IMR-90 (cell line): ENCODE measurements at regions of chr1 and their contacts with region 1.

Region 1: DNA sequence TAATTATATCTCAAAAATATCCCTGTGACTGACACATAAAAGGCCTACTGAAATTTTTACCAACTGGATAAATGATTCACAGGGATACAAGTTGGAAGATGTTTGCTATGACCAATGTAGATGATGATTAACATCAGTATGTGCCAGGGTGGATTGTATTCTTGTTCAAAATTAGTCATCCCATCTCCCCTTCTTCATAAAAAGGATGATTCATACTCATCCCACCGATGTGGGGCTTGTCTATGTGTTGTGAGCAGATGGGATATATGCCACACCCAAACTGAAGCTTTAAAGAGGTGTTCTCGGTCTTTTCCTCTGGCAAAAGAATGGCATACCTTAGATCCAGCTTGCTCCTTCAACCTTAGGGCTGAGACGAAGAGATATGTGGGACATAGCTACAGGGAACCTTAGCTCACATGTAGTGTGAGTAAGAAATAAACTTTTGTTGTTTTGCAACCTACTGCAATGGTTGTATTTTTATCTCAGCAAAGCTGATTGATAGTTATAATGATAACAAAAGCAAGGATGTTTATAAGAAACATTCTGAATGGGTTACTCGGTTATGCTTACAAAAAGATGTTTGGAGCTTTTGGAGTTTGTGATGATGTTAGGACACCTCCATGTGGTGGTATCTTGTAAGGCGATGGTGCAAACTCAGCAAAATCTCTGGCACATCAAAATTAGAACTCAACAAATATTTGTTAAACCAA is 29.4 kb downstream of the SPATA17 start:
- DNase-seq: peak; percentile 90
- ATAC-seq: peak; percentile 93
- H3K4me3 ChIP-seq: no peak overlapping the region
- H3K27ac ChIP-seq: peak overlapping the region; percentile 74
- H3K4me1 ChIP-seq: peaks cover 5% of the 10 kb centered on the region
- H3K27me3 ChIP-seq: no peaks in the 10 kb centered on the region
- CTCF ChIP-seq: peak; percentile 78
- POLR2A ChIP-seq: no peak
- RAD21 ChIP-seq: peak; percentile 75

Region 2: DNA sequence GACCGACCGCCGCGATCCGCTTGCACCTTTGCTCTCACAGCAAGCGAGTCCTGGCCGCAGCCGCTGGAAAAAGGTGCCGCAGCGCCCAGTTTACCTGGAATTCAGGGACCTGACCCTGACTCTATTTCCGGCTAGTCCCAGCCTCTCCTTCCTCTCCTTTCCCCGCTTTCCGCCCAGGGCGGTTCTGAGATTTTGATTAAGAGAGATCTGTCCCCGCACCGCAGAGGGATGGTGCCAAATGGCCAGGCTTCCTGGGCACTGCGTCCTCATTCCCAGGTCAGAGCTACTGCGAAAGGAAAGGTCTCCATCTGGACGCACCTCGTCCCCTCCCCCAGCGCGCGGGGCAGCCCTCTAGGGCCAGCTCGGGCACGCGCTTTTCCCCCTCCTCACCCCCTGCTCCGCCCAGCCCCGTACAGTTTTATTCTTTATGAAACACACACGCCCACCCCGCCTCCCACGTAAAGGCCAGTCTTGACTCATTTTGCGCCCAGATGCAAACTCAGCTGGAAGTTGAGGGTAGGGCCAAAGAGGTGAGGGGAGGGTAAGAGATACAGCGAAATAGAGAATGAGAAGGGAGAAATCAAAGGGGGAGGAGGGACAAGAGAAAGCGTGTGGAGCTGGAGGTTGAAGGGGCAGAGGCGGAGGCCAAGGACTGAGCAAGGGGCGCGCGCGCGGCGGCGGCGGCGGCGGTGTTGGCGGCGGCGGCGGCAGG is 525.5 kb before region 1 on chr1:
- CTCF ChIA-PET with region 1: no interaction called
- POLR2A ChIA-PET with region 1: no interaction called
- dilution Hi-C with region 1: no loop called
- in situ Hi-C with region 1: no loop called
- intact Hi-C with region 1: loop called (anchors 10 kb)
- DNase-seq: peak; percentile 4
- ATAC-seq: peak; percentile 67
- H3K4me3 ChIP-seq: peak overlapping the region; percentile 75
- H3K27ac ChIP-seq: no peak overlapping the region
- H3K4me1 ChIP-seq: no peaks in the 10 kb centered on the region; the same call in 1 of the 2 replicates
- H3K27me3 ChIP-seq: peaks cover 50% of the 10 kb centered on the region
- CTCF ChIP-seq: no peak
- POLR2A ChIP-seq: no peak
- RAD21 ChIP-seq: no peak

Region 3: GRCh38 chr1:217418269-217419193 is 242.0 kb before region 1 on chr1:
- CTCF ChIA-PET with region 1: no interaction called
- POLR2A ChIA-PET with region 1: no interaction called
- dilution Hi-C with region 1: no loop called
- in situ Hi-C with region 1: no loop called
- intact Hi-C with region 1: loop called (anchors 2 kb)
- DNase-seq: peak; percentile 58
- ATAC-seq: peak; percentile 85
- H3K4me3 ChIP-seq: peak overlapping the region; percentile 12; the same call in 1 of the 2 replicates
- H3K27ac ChIP-seq: peak overlapping the region; percentile 45; the same call in 1 of the 2 replicates
- H3K4me1 ChIP-seq: peaks cover 2% of the 10 kb centered on the region
- H3K27me3 ChIP-seq: no peaks in the 10 kb centered on the region
- CTCF ChIP-seq: no peak
- POLR2A ChIP-seq: no peak
- RAD21 ChIP-seq: no peak

Region 4: DNA sequence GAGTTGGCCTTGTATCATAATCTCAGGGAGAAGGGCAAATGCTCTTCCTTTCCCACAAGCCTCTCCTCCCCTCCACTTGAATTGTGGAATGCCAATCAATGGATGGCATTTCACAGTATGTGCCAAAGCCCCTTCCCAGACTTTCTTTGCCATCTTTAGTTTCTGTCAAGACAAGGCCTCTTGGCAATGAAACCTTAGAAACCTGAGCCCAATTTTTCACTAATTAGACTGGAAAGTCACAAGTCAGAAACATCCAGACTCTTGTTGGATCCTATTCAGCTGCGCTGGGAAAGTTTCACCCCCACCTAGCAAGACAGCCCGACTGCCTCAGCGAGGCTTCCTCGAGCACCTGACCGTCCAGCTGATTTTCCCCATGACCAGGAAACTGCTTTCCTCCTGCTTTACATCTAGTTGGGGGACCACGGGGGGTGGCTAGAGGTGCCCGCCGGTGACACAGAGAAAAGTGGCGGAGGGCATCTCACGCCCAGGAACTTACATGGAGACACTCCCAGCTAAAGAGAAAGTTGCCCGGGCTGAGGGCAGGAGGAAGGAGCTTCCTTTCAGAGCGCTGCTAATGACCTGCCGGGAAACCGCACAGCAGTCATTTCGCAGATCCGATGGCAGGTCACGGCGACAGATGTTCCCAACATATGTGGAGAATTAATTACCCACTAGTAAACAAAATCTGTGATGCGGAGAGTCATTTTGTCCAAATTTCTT is 322.0 kb after region 1 on chr1:
- CTCF ChIA-PET with region 1: no interaction called
- POLR2A ChIA-PET with region 1: no interaction called
- dilution Hi-C with region 1: no loop called
- in situ Hi-C with region 1: no loop called
- intact Hi-C with region 1: no loop called
- DNase-seq: no peak
- ATAC-seq: no peak
- H3K4me3 ChIP-seq: no peak overlapping the region
- H3K27ac ChIP-seq: no peak overlapping the region
- H3K4me1 ChIP-seq: no peaks in the 10 kb centered on the region
- H3K27me3 ChIP-seq: no peaks in the 10 kb centered on the region; the same call in 1 of the 2 replicates
- CTCF ChIP-seq: no peak
- POLR2A ChIP-seq: no peak
- RAD21 ChIP-seq: no peak